ENCODE measurements at regions of chr1 and their contacts with region 1.

Region 1: GRCh38 chr1:156434989-156435544 is 65.5 kb downstream of the MEF2D start:
- DNase-seq: no peak

Region 2: DNA sequence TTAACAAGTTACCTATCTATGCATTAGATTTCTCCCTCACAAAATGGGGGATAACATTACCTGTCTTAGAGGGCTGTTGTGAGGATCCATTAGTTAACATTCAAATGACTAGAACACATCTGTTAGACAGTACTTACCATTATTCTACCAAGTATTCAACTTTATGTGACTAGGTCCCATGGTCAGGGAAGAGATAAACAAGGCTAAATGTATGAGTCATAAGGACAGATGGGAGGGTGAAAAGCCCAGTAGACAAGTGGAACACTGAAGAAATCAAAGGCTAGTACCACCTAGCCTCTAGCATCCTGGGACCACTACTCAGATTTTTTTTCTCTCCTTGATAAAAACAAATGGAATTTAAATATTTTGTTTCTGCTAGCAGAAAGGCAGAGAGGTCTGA is 127.0 kb before region 1 on chr1:
- in situ Hi-C with region 1: no loop called
- DNase-seq: no peak

Region 3: DNA sequence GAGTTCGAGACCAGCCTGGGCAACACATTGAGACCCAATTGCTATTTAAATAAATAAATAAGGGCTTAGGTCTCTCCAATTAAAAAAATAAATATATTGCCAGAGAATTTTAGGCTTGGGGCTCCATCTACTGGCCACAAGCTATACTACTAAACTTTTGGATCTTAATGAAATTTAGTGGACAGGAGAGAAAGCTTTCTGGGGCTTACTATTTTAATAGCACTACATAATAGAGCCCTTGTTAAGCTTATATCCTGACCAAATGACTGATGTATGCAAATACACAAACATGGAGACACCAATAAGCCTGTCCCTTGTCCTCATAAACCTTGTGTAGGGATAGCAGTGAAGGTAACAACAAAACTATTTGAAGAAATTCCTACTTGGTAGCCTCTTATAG is 115.4 kb before region 1 on chr1:
- in situ Hi-C with region 1: no loop called
- DNase-seq: peak; percentile 40

Region 4: DNA sequence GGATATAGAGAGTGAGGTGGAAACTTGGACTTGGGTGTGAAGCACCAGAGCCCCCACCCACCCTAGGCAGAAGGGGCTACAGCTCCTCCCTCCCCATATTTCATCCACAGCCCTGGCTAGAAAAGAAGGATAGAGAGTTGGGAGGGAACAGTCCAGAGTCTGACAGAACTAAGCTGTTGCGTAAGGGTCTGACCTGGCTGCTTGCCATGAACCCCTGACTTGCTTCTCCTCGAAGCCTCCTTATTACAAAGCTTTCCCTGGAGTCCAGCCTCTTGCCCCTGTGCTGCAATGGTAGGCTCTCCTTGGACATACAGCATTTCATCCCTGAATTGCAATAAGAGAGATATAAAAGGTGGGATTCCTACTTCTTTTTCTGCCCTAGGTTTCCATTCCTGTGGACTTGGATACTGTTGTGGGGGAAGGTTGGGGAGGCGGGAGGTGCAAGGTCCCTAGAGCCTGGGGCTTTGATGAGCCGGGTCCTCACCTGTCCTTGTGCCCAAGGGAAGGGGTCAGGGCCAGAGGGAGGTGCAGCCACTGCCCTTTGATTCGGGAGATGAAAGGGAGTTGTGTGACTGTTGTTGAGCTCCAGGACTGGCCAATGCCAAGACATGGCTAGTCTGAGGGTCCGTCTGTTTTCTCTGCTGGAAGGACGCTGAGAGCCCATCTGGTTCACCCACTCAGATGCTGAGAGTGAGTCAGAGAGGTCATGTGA is 63.4 kb before region 1 on chr1:
- in situ Hi-C with region 1: loop called (anchors 5 kb)
- DNase-seq: peak; percentile 93

Region 5: GRCh38 chr1:156551866-156552265 is 116.8 kb after region 1 on chr1:
- in situ Hi-C with region 1: no loop called
- DNase-seq: no peak

Measured in G401 (cell line).